ENCODE measurements at regions of chr15 and their contacts with region 1.

Region 1: DNA sequence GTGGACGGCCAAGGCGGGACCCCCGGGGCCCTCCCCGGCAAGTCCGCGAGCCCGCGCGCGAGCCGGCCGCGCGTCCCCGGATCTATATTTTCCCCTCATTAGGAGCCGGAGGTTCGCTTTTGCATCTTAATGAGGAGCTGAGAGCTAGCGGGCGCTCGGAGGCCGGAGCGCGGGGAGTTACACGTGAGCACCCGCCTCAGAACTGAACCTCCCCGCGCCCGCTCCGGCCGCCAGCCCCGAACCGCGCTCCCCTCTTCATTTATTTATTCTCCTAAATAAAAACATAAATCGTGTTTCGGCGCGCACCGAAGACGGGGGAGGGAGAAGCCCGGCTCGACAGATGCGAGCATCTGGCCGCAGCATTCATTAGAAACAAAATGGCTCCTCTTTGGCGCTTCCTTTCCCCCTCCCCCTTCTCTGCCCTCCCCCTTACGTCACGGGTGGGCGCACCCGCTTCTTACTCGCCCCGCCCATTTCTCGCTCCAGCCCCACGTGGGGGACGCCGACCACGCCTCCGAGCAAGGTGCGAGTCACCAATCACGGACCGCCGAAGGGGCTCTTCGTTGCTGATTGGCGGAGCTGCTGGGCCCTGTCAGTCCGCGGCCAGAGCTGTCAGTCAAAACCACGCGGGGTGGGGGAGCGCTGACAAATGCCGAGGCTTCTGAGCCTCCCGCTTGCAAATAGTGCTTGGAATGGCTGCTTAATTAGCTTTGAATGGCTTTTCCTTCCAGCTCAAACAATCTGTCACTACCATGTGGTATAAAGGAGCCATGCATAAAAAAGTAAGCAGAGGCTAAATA is 1.6 kb upstream of the TLE3 start:
- DNase-seq: peak; percentile 98 to 100 (median 100)
- ATAC-seq: peak; percentile 48 to 63 (median 52)
- H3K4me3 ChIP-seq: peak overlapping the region; percentile 83 to 85
- H3K4me3 Mint-ChIP-seq: peak overlapping the region; percentile 94 to 98 (median 94)
- H3K27ac ChIP-seq: peak overlapping the region; percentile 95
- H3K27ac Mint-ChIP-seq: peak overlapping the region; percentile 98 to 99
- H3K4me1 ChIP-seq: peaks cover 23 to 49% of the 10 kb centered on the region in 2 experiments
- H3K4me1 Mint-ChIP-seq: peaks cover 21 to 49% (median 39%) of the 10 kb centered on the region in 3 donors
- H3K27me3 ChIP-seq: peaks cover 0 to 16% of the 10 kb centered on the region in 2 experiments
- H3K27me3 Mint-ChIP-seq: peaks cover 0 to 4% of the 10 kb centered on the region in 2 donors

Region 2: DNA sequence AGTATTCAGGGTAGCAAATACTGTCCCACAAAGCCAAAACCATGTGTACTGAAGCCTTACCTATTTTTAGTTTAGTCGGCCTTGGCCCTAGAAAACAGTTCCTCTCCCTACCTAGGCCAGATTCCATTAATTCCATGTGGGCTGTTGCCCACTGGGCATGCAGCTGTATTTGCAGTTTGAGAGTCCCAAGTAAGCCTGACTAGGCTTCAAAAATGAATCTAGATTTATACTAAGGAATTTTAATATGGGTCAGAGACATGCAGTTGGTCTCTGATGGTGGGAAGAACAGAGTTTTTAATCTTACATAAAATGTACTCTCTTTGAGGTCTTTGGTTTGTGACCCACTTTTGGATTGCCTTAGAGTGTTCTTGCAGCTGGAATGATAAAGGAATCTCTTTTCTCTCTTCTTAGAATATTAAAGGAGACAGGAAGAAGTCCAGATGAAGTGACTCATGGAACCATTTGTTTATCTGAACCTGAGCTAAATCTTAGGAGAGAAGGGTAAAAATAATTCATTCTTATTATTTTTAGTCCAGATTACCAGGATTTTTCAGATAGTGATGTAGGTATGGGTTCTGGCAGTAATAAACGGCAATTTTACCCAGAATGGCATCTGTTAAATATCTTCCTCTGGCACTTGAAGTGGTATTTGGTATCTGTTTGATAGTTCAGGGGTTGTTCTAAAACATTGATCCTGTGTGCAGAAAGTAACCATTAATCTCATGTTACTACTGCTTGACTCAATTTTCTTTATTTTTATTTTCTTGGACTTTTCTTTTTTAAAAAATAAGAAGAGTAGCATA is 905.1 kb before region 1 on chr15:
- CTCF ChIA-PET with region 1: no interaction called
- POLR2A ChIA-PET with region 1: no interaction called
- DNase-seq: no peak
- ATAC-seq: no peak
- H3K4me3 ChIP-seq: no peak overlapping the region
- H3K4me3 Mint-ChIP-seq: no peak overlapping the region
- H3K27ac ChIP-seq: no peak overlapping the region
- H3K27ac Mint-ChIP-seq: no peak overlapping the region
- H3K4me1 ChIP-seq: no peaks in the 10 kb centered on the region
- H3K4me1 Mint-ChIP-seq: peaks cover 0 to 6% (median 5%) of the 10 kb centered on the region in 3 donors
- H3K27me3 ChIP-seq: no peaks in the 10 kb centered on the region
- H3K27me3 Mint-ChIP-seq: no peaks in the 10 kb centered on the region

Region 3: DNA sequence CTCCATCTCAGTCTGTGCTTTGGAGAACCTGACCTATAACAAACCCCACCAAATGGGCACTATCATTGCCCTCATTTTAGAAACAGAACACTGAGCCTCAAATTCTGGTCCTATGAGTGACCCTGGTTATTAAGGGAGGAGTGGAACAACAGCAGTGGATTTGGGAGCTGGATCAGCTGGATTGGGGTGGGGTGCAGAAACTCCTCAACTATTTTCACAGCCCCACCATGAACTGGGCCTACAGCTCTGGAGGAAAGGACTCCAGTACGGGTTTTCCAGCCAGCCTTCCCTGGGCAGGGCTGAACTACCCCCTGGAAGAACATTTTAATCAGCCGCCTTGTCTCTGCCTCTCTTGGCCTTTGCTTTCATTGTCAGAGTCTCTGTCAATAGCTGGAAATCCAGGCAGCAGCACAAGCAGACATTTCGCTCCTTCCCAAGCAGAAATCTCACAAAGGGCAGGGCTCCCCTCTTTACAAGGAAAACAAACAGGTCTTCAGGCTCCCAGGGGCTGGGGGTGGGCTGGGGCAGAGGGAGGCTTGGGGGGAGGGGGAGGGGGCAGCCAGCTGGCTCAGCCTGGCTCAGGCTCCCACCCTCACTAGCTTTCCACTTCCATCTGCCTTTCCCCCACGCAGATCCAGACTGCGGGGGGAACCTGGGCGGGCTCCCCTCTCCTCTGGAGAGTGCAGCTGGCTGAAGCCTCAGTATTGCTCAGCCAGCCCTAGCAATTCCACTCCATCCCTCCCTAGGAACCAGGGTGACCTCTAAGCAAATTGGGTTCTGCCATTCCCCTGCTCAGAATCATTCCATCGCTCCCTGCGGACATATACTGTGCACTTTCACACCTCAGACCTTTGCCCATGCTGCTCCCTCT is 12.1 kb after region 1 on chr15:
- CTCF ChIA-PET with region 1: no interaction called
- POLR2A ChIA-PET with region 1: no interaction called
- DNase-seq: no peak
- ATAC-seq: no peak
- H3K4me3 ChIP-seq: no peak overlapping the region
- H3K4me3 Mint-ChIP-seq: no peak overlapping the region
- H3K27ac ChIP-seq: no peak overlapping the region
- H3K27ac Mint-ChIP-seq: peak overlapping the region in 1 of 2 donors; percentile 33
- H3K4me1 ChIP-seq: peaks cover 0 to 3% of the 10 kb centered on the region in 2 experiments
- H3K4me1 Mint-ChIP-seq: peaks cover 0 to 5% (median 0%) of the 10 kb centered on the region in 3 donors
- H3K27me3 ChIP-seq: peaks cover 0 to 14% of the 10 kb centered on the region in 2 experiments
- H3K27me3 Mint-ChIP-seq: peaks cover 8 to 13% of the 10 kb centered on the region in 2 donors

Region 4: GRCh38 chr15:70127288-70127746 is 27.9 kb after region 1 on chr15:
- CTCF ChIA-PET with region 1: no interaction called
- POLR2A ChIA-PET with region 1: no interaction called
- DNase-seq: no peak
- ATAC-seq: no peak
- H3K4me3 ChIP-seq: no peak overlapping the region
- H3K4me3 Mint-ChIP-seq: no peak overlapping the region
- H3K27ac ChIP-seq: no peak overlapping the region
- H3K27ac Mint-ChIP-seq: no peak overlapping the region
- H3K4me1 ChIP-seq: no peaks in the 10 kb centered on the region
- H3K4me1 Mint-ChIP-seq: no peaks in the 10 kb centered on the region
- H3K27me3 ChIP-seq: peaks cover 0 to 25% of the 10 kb centered on the region in 2 experiments
- H3K27me3 Mint-ChIP-seq: peaks cover 3 to 12% of the 10 kb centered on the region in 2 donors

Region 5: DNA sequence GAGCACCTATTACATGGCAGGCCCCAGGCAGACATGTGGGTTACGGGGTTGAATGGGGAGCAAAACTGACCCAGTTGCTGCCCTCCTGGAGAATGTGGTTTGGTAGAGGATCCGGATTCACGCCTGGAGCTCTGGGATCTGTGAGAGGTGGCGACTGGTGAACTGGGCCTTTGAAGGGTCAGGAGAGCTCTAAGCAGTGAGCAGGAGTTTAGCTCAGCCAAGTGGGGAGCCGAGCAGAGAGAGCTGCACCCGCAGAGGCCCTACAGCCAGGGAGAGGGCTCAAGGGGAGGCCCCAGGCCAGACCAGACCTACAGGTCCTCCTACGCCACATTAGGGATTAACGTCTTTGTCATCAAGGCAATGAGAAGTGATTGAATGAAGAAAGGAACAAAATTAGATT is 178.2 kb after region 1 on chr15:
- CTCF ChIA-PET with region 1: no interaction called
- POLR2A ChIA-PET with region 1: interaction called in 1 of 2 experiments, 11 read pairs
- DNase-seq: no peak
- ATAC-seq: no peak
- H3K4me3 ChIP-seq: no peak overlapping the region
- H3K4me3 Mint-ChIP-seq: no peak overlapping the region
- H3K27ac ChIP-seq: no peak overlapping the region
- H3K27ac Mint-ChIP-seq: no peak overlapping the region
- H3K4me1 ChIP-seq: no peaks in the 10 kb centered on the region
- H3K4me1 Mint-ChIP-seq: peaks cover 0 to 8% (median 7%) of the 10 kb centered on the region in 3 donors
- H3K27me3 ChIP-seq: peaks cover 0 to 4% of the 10 kb centered on the region in 2 experiments
- H3K27me3 Mint-ChIP-seq: peaks cover 0 to 5% of the 10 kb centered on the region in 2 donors

Region 6: GRCh38 chr15:70474471-70475396 is 375.4 kb after region 1 on chr15:
- CTCF ChIA-PET with region 1: no interaction called
- POLR2A ChIA-PET with region 1: no interaction called
- DNase-seq: peak in 11 of 35 experiments; percentile 11 to 55 (median 33)
- ATAC-seq: peak; percentile 57 to 64 (median 60)
- H3K4me3 ChIP-seq: peak overlapping the region; percentile 18 to 40
- H3K4me3 Mint-ChIP-seq: peak overlapping the region; percentile 54 to 77 (median 59)
- H3K27ac ChIP-seq: no peak overlapping the region
- H3K27ac Mint-ChIP-seq: peak overlapping the region in 1 of 2 donors; percentile 8
- H3K4me1 ChIP-seq: peaks cover 22 to 39% of the 10 kb centered on the region in 2 experiments
- H3K4me1 Mint-ChIP-seq: peaks cover 31 to 44% (median 36%) of the 10 kb centered on the region in 3 donors
- H3K27me3 ChIP-seq: peaks cover 0 to 44% of the 10 kb centered on the region in 2 experiments
- H3K27me3 Mint-ChIP-seq: peaks cover 4 to 15% of the 10 kb centered on the region in 2 donors

Region 7: DNA sequence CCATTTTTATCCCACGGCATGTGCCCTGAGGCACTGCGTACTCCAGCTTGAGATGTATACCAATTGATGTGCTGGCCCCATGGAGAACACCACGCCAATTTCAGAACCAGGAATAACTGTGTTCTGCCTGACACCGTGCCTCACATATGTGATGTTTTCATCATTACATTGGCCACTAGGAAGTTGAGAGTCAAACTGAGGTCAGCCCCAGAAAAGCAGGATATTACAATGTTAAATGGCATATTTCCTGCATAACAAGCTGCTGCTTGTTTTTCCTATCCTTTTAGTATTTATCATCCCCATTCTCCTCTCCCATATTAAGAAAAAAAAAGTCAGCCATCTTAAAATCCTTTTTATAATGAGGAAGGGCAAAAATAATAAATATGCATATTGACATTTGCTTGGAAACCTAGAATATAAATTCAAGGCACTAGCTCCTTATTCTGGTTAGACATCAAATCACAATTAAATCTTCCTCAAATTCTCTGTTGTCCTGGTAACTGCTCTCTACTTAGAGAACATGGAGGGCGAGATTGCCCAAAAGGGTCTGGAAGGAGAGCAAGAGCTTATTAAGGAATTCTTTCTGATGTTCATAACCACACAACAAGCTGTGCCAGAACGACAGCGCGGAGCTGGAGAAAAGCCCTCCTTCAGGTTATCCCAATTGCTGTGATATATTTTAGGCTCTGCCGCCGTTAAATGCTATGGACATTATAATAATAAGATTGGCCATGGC is 551.4 kb after region 1 on chr15:
- CTCF ChIA-PET with region 1: interaction called in 1 of 2 experiments, 12 read pairs
- POLR2A ChIA-PET with region 1: no interaction called
- DNase-seq: no peak
- ATAC-seq: no peak
- H3K4me3 ChIP-seq: no peak overlapping the region
- H3K4me3 Mint-ChIP-seq: no peak overlapping the region
- H3K27ac ChIP-seq: no peak overlapping the region
- H3K27ac Mint-ChIP-seq: no peak overlapping the region
- H3K4me1 ChIP-seq: no peaks in the 10 kb centered on the region
- H3K4me1 Mint-ChIP-seq: no peaks in the 10 kb centered on the region
- H3K27me3 ChIP-seq: no peaks in the 10 kb centered on the region
- H3K27me3 Mint-ChIP-seq: peaks cover 12 to 20% of the 10 kb centered on the region in 2 donors

Measured in T-cell (primary cell).